ENCODE measurements at regions of chr2 and their contacts with region 1.

Region 1: GRCh38 chr2:173402405-173402974 is 47.8 kb downstream of the CDCA7 start:
- ATAC-seq: peak; percentile 94 to 100 (median 99)
- H3K4me3 ChIP-seq: peak overlapping the region in 2 of 5 donors; percentile 3 to 13
- H3K27ac ChIP-seq: no peak overlapping the region
- H3K4me1 ChIP-seq: peaks cover 12 to 31% of the 10 kb centered on the region in 2 donors

Region 2: GRCh38 chr2:173571021-173571882 is 168.8 kb after region 1 on chr2:
- in situ Hi-C with region 1: loop called in 1 of 9 experiments (anchors 25 kb)
- ATAC-seq: peak; percentile 55 to 89 (median 83)
- H3K4me3 ChIP-seq: peak overlapping the region in 1 of 5 donors; percentile 5
- H3K27ac ChIP-seq: peak overlapping the region; percentile 44 to 51
- H3K4me1 ChIP-seq: peaks cover 29 to 32% of the 10 kb centered on the region in 2 donors